H1 (cell line): ENCODE measurements at regions of chr1 and their contacts with region 1.

Region 1: GRCh38 chr1:79259388-79260336 is 253.1 kb upstream of the ADGRL4 start:
- DNase-seq: no peak
- H3K4me3 ChIP-seq: no peak overlapping the region
- H3K27ac ChIP-seq: no peak overlapping the region
- H3K4me1 ChIP-seq: peaks cover 5 to 15% (median 11%) of the 10 kb centered on the region in 4 experiments; a peak in 6 of 7 replicates
- H3K27me3 ChIP-seq: no peaks in the 10 kb centered on the region
- CTCF ChIP-seq: peak in 2 of 3 experiments; percentile 32 to 56; a peak in 2 of 4 replicates
- EP300 ChIP-seq: no peak
- POLR2A ChIP-seq: no peak
- RAD21 ChIP-seq: peak; percentile 76 to 82

Region 2: GRCh38 chr1:79353224-79353623 is 93.6 kb after region 1 on chr1:
- CTCF ChIA-PET with region 1: interaction called, 19 read pairs
- POLR2A ChIA-PET with region 1: no interaction called
- DNase-seq: peak in 1 of 2 experiments; percentile 46
- H3K4me3 ChIP-seq: no peak overlapping the region
- H3K27ac ChIP-seq: no peak overlapping the region
- H3K4me1 ChIP-seq: no peaks in the 10 kb centered on the region
- H3K27me3 ChIP-seq: no peaks in the 10 kb centered on the region; a peak in 1 of 7 replicates
- CTCF ChIP-seq: peak in 2 of 3 experiments; percentile 36 to 48; a peak in 2 of 4 replicates
- EP300 ChIP-seq: no peak
- POLR2A ChIP-seq: no peak
- RAD21 ChIP-seq: peak; percentile 43 to 44

Region 3: DNA sequence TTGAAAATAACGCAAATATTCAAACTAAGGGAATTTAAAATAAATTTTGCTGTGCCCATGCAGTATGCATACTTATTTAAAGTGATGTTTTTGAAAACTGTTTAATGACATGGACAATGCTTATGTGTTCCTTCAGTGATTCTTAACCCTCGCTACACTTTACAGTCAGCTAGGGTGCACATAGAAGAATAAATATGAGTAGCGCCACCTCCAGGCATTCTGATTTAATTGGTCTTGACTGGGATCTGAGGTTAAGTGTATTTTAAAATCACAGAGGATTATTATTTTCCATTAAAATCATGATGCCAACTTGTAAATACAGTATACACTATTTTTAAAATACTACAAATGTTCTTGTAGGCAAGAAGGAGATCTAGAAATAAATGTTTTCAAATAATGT is 120.4 kb after region 1 on chr1:
- CTCF ChIA-PET with region 1: interaction called, 10 read pairs
- POLR2A ChIA-PET with region 1: no interaction called
- DNase-seq: no peak
- H3K4me3 ChIP-seq: no peak overlapping the region
- H3K27ac ChIP-seq: no peak overlapping the region
- H3K4me1 ChIP-seq: peaks cover 0 to 3% (median 1%) of the 10 kb centered on the region in 4 experiments; a peak in 2 of 7 replicates
- H3K27me3 ChIP-seq: no peaks in the 10 kb centered on the region
- CTCF ChIP-seq: peak in 2 of 3 experiments; percentile 12 to 51; a peak in 2 of 4 replicates
- EP300 ChIP-seq: no peak
- POLR2A ChIP-seq: no peak
- RAD21 ChIP-seq: peak; percentile 25 to 46